Sigmoid colon (tissue), 7 donors: ENCODE measurements at regions of chr2 and their contacts with region 1.

Region 1: DNA sequence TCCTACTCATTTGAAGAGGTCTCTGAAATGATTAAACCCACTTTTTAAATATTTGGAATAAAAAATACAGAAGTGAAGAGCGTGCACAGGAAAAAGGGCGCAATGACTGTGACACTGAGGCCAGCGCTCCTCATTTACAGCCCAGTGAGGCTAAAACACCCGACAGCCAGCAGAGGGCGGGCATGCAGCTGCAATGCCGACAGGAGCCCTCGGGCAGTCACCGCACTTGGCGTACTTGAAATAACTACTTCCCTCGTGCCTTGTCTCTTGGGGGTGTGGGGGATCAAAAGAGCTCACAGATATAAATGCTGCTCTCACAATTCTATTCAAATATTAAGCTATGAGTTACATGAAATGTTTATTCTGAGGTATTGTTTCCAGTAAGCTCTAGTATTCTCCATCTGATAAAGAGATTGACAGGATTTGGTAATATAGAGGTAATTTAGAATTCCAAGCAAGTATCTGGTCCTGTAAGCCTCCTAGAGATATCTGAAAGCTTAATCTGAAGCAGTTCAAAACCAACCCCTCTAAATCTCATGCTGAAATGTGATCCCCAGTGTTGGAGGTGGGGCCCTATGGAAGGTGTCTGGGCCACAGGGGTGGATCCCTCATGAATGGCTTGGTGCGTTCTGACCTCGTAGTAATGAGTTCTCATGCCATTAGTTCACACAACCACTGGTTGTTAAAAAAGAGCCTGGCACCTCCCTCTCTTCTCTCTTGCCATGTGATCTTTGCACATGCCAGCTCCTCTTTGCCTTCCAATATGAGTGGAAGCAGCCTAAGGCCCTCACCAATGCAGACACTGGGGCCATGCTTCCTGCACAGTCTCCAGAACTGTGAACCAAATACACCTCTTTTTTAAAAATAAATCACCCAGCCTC is 93.6 kb downstream of the ZAP70 start:
- DNase-seq: peak; percentile 89
- H3K4me3 ChIP-seq: no peak overlapping the region
- H3K27ac ChIP-seq: peak overlapping the region in 1 of 4 donors; percentile 0
- H3K4me1 ChIP-seq: peaks cover 0 to 5% (median 0%) of the 10 kb centered on the region in 4 donors
- H3K27me3 ChIP-seq: no peaks in the 10 kb centered on the region
- CTCF ChIP-seq: peak; percentile 84 to 94 (median 88)
- EP300 ChIP-seq: no peak
- POLR2A ChIP-seq: no peak

Region 2: DNA sequence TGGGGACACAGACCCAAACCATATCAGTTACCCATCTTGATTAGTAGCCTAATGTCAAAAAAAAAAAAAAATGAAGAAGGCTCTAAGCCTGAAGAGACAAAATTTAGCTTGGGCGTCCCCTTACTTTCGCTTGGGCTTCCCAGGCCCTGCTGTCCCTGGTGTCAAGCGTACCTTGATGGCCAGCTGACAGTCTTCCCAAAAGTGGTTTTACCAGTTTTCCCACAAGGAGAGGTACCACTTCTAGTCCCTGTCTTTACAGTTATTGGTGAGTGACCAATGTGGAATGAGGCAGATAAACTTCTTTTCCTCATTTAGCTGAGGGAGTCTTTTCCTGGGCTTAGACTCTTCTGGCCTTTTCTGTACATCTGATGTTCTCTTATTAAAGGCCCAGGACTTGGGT is 814.7 kb before region 1 on chr2:
- intact Hi-C with region 1: no loop called
- DNase-seq: no peak
- H3K4me3 ChIP-seq: no peak overlapping the region
- H3K27ac ChIP-seq: no peak overlapping the region
- H3K4me1 ChIP-seq: no peaks in the 10 kb centered on the region
- H3K27me3 ChIP-seq: no peaks in the 10 kb centered on the region
- CTCF ChIP-seq: no peak
- EP300 ChIP-seq: no peak
- POLR2A ChIP-seq: no peak

Region 3: GRCh38 chr2:98086491-98087446 is 279.8 kb after region 1 on chr2 and contains the start of gene VWA3B:
- intact Hi-C with region 1: loop called (anchors 10 kb)
- DNase-seq: peak; percentile 76
- H3K4me3 ChIP-seq: peak within 1 kb of the TSS; percentile 6 to 49 (median 45)
- H3K27ac ChIP-seq: peak within 1 kb of the TSS in 1 of 4 donors; percentile 11
- H3K4me1 ChIP-seq: peaks cover 0 to 15% (median 14%) of the 10 kb centered on the region in 4 donors
- H3K27me3 ChIP-seq: no peaks in the 10 kb centered on the region
- CTCF ChIP-seq: no peak
- EP300 ChIP-seq: no peak
- POLR2A ChIP-seq: no peak
- total RNA-seq, gene VWA3B: 0.55 TPM in 1 of 4 donors, not detected in the others

Region 4: DNA sequence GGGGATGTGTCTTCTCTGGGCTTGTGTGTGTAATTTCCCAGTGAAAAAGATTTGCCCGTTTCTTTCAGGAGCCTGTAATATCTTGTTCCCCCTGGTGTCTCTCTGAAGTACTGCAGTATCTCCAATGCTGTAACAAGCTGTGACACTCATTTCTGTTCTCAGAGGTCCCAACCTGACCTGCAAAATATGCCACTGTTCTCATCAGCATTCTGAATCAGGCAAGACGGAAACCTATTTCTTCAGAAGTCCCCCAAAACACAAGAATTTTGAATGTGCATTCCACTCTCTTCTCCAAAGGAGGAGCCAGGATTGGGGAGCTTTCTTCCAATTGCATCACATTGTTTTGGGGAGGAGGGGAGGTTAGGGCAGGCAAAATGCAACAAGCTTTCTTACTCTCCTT is 462.3 kb after region 1 on chr2:
- intact Hi-C with region 1: loop called (anchors 2 kb)
- DNase-seq: no peak
- H3K4me3 ChIP-seq: no peak overlapping the region
- H3K27ac ChIP-seq: peak overlapping the region in 1 of 4 donors; percentile 34
- H3K4me1 ChIP-seq: peaks cover 0 to 31% (median 20%) of the 10 kb centered on the region in 4 donors
- H3K27me3 ChIP-seq: no peaks in the 10 kb centered on the region
- CTCF ChIP-seq: peak; percentile 51 to 87 (median 68)
- EP300 ChIP-seq: no peak
- POLR2A ChIP-seq: no peak

Region 5: GRCh38 chr2:98385050-98385699 is 578.2 kb after region 1 on chr2:
- intact Hi-C with region 1: loop called (anchors 1 kb)
- DNase-seq: peak; percentile 83
- H3K4me3 ChIP-seq: no peak overlapping the region
- H3K27ac ChIP-seq: no peak overlapping the region
- H3K4me1 ChIP-seq: peaks cover 0 to 6% (median 0%) of the 10 kb centered on the region in 4 donors
- H3K27me3 ChIP-seq: no peaks in the 10 kb centered on the region
- CTCF ChIP-seq: peak; percentile 92 to 97 (median 94)
- EP300 ChIP-seq: no peak
- POLR2A ChIP-seq: no peak